Dendritic cell treated with granulocyte-macrophage colony-stimulating factor and Interleukin-4, amounts not matched to agents 40 ng/mL and 50 ng/mL, for 4 days (primary cell): ENCODE measurements at regions of chr5 and their contacts with region 1.

Region 1: GRCh38 chr5:115098041-115098702 is 71.5 kb downstream of the TRIM36 start:
- H3K4me3 Mint-ChIP-seq: no peak overlapping the region
- H3K27ac Mint-ChIP-seq: no peak overlapping the region
- H3K4me1 Mint-ChIP-seq: no peaks in the 10 kb centered on the region
- H3K27me3 Mint-ChIP-seq: peaks cover 7% of the 10 kb centered on the region

Region 2: GRCh38 chr5:115246361-115246991 is 148.3 kb after region 1 on chr5:
- intact Hi-C with region 1: loop called (anchors 1 kb)
- H3K4me3 Mint-ChIP-seq: no peak overlapping the region
- H3K27ac Mint-ChIP-seq: no peak overlapping the region
- H3K4me1 Mint-ChIP-seq: peaks cover 36% of the 10 kb centered on the region
- H3K27me3 Mint-ChIP-seq: no peaks in the 10 kb centered on the region